ENCODE measurements at regions of chr14 and their contacts with region 1.

Region 1: DNA sequence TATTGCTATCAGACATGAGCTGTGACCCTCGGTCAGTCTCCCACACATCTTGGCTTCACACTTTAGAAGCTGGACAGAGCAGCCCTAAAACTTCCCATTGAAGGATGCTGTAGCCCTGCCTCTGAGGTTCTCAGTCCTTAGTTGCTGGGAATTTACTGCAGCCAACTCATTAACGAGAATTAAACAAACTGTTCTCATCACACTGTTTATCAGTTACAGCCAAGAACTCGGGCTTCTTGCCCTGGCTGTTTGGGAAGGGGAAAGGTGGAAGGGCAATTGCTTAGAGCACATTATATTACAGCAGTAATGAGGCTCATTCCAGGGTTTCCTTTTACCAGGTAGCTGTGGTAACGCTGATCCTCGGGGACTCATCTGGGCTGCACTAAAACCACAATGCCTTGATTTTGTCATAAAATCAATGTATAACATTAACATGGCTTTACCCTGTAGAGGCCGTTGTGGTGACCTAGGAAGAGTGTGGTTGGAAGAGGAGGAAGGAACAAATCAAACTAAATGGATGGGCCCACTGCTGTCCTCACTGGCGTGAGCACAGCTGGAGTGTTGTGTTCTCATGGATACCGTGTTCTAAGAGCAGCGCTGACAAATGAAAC is 87.1 kb downstream of the GPR135 start:
- DNase-seq: peak in 1 of 3 donors; percentile 74
- ATAC-seq: peak; percentile 78 to 95
- H3K4me3 ChIP-seq: no peak overlapping the region
- H3K27ac ChIP-seq: peak overlapping the region; percentile 84
- H3K4me1 ChIP-seq: peaks cover 7% of the 10 kb centered on the region
- H3K27me3 ChIP-seq: no peaks in the 10 kb centered on the region

Region 2: GRCh38 chr14:59126710-59127432 is 251.2 kb before region 1 on chr14:
- intact Hi-C with region 1: no loop called
- DNase-seq: no peak
- ATAC-seq: peak; percentile 83 to 92
- H3K4me3 ChIP-seq: no peak overlapping the region
- H3K27ac ChIP-seq: no peak overlapping the region
- H3K4me1 ChIP-seq: no peaks in the 10 kb centered on the region
- H3K27me3 ChIP-seq: no peaks in the 10 kb centered on the region

Region 3: GRCh38 chr14:59419303-59419702 is 41.2 kb after region 1 on chr14:
- intact Hi-C with region 1: loop called in 2 of 4 experiments (anchors 5 to 10 kb)
- DNase-seq: no peak
- ATAC-seq: peak; percentile 36 to 65
- H3K4me3 ChIP-seq: no peak overlapping the region
- H3K27ac ChIP-seq: peak overlapping the region; percentile 13
- H3K4me1 ChIP-seq: peaks cover 5% of the 10 kb centered on the region
- H3K27me3 ChIP-seq: no peaks in the 10 kb centered on the region

Region 4: DNA sequence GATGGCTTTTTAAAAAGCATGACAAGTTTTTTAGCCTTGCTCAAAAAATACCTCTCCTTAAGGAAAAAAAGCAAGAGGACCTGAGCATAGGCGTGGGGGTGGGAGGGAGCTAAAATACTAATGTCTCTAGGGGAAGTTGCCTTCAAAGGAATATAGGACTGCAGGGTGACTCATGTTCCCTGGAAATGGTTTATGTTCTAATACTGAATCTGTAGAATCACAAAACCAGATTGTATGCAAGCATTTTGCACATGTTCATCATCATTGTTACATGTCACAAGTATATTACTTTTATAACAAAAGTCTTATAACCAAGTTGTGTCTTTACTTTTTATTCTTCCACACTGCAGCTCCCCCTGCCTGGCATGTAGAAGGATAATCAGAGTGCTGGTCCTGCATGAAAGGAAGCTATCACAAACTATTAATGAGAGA is 50.5 kb after region 1 on chr14:
- intact Hi-C with region 1: loop called in 1 of 4 experiments (anchors 10 kb)
- DNase-seq: no peak
- ATAC-seq: peak in 1 of 2 donors; percentile 8
- H3K4me3 ChIP-seq: no peak overlapping the region
- H3K27ac ChIP-seq: peak overlapping the region; percentile 95
- H3K4me1 ChIP-seq: peaks cover 18% of the 10 kb centered on the region
- H3K27me3 ChIP-seq: no peaks in the 10 kb centered on the region

Region 5: DNA sequence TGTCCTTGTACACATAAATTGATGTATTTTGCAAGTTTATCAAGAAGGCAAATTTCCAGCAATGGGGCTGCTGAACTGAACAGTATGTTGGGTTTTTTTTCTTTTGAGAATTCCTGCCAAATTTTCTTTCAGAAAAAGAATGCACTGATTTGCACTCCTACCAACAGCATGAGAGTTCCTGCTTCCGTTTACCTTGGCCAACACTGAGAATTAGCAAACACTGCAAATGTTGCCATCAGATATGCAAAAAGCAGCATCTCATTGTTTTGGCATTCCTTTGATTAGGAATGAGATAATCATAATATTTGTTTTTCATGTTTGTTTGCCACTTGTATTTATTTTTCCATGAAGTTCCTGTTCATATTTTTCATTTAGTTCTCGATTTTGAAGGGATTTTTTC is 410.1 kb after region 1 on chr14:
- intact Hi-C with region 1: no loop called
- DNase-seq: no peak
- ATAC-seq: no peak
- H3K4me3 ChIP-seq: no peak overlapping the region
- H3K27ac ChIP-seq: no peak overlapping the region
- H3K4me1 ChIP-seq: no peaks in the 10 kb centered on the region
- H3K27me3 ChIP-seq: no peaks in the 10 kb centered on the region